ENCODE measurements at regions of chr16 and their contacts with region 1.

Region 1: DNA sequence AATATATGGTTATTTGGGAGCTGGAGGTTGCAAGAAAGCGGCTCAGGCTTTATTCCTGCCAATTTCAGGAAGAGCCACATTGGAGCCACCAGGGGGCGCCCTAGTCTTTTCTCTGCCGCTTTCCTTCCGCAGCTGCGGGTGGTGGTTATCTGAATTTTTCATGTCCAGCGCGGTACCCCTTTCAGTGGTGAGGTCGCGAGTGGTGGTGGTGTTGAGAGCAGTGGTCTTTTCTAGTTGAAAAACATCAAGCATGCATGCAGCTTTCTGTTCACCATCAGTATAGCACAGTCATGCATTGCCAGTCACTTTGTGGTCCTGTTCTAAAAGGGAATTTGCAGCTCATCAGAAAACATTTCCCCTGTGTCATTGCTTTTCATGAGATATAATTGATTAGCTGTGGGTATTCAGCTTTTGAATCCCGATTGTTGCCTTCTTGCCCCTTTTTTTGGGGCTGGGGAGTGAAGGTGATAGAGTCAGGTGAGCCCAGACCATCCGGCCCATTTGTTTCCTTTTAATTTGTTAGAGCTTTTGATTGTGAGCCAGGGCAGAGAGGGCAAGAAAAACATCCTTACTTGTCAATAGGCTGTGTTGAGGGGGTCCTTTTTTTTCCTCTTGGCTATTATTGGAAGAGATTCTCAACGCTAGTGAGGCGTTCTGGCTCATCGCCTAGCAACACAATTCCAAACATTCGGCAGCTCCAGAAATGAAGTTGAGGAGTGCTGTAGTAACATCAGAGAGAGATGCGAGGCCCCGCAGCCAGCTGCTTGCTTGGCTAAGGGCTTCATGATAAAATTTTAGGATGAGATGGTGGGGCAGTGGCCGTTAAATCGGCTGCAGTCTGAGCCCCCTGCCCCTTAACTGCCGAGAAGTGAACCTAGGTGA is 119.0 kb downstream of the SNX29 start:
- DNase-seq: peak; percentile 65 to 87 (median 78)
- ATAC-seq: peak; percentile 59 to 61
- H3K4me3 ChIP-seq: peak overlapping the region; percentile 25
- H3K27ac ChIP-seq: no peak overlapping the region
- H3K4me1 ChIP-seq: peaks cover 13% of the 10 kb centered on the region
- H3K27me3 ChIP-seq: no peaks in the 10 kb centered on the region

Region 2: DNA sequence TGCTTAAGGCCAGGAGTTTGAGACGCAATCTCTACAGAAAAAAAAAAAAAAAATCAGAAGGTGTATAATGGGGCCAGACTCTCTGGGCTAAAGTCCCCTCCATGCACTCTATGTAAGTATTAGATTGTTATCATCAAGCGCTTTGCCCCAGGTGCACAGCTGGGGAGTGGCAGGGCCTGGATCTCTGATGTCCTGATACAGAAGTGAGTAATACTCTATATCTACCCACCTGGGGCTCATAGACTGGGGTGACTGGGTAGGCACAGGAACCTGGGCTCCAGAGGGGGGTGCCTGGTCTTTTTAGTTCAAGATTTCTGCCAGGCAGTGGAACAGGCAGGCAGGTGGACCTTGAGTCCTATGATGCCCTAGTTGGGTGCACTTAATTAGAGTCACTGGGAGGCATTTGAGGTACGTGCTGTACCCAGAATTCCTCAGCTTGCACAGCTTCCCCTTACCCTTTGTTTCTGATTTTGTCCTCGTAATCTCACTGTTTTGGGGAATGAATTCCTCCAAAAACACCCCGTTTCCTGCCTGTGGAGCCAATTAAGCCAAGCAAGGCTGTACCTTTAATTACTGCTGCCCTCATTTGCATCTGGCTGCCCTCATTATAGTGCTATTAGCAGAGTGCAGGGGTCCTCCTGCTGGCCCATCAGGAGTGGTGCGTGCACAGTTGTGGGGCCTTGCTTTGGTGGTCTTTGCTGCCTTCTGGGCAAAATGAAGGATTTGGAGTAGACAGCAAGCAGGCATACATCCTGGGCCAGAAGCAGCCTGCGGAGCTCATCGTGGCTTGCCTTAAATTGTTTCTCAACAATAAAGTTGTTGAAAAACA is 120.0 kb after region 1 on chr16:
- intact Hi-C with region 1: loop called in 3 of 4 experiments (anchors 5 to 10 kb)
- DNase-seq: no peak
- ATAC-seq: peak in 1 of 2 donors; percentile 46
- H3K4me3 ChIP-seq: no peak overlapping the region
- H3K27ac ChIP-seq: no peak overlapping the region
- H3K4me1 ChIP-seq: no peaks in the 10 kb centered on the region
- H3K27me3 ChIP-seq: no peaks in the 10 kb centered on the region

Region 3: DNA sequence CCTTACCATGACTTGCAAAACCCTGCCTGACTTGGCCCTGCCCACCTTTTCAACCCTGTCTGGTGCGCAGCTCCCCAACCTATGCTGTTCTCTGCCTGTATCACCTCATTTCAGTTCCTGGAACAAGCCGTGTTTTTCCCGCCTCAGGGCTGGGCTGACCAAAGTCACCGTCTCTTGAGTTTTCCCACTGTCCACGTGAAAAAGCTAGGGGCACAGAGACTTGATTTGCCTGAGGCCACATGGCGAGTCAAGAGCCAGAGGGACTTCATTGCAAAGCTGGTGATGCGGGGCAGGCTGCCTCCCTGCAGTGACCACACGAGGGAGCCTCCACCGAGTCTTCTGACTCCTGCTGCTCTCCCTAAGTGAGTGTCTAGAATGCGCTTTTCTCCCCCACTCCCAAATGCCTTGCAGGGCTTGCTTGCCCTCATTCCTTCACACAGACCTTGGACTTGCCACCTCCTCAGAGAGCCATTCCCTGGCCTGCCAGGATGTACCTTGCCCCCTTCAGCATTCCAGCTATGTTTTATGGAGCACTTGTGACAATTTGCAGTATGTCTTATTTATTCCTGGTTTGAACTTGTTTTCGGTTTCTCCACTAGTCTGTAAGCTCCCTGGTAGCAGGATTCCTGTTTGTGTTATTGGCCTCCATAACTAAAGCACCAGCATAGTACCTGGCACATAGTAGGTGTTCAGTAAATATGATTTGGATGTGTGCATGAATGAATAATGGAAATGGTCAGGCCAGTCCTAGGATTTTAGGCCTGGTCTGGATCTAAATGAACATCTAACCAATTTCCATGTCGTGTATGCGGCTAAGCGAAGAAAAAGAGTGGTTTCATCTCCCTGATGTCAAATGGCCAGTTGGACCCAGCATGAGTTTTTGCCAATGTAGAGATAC is 133.3 kb after region 1 on chr16:
- intact Hi-C with region 1: loop called in 1 of 4 experiments (anchors 10 kb)
- DNase-seq: peak; percentile 41 to 81 (median 71)
- ATAC-seq: peak; percentile 71 to 80
- H3K4me3 ChIP-seq: no peak overlapping the region
- H3K27ac ChIP-seq: no peak overlapping the region
- H3K4me1 ChIP-seq: no peaks in the 10 kb centered on the region
- H3K27me3 ChIP-seq: no peaks in the 10 kb centered on the region

Region 4: DNA sequence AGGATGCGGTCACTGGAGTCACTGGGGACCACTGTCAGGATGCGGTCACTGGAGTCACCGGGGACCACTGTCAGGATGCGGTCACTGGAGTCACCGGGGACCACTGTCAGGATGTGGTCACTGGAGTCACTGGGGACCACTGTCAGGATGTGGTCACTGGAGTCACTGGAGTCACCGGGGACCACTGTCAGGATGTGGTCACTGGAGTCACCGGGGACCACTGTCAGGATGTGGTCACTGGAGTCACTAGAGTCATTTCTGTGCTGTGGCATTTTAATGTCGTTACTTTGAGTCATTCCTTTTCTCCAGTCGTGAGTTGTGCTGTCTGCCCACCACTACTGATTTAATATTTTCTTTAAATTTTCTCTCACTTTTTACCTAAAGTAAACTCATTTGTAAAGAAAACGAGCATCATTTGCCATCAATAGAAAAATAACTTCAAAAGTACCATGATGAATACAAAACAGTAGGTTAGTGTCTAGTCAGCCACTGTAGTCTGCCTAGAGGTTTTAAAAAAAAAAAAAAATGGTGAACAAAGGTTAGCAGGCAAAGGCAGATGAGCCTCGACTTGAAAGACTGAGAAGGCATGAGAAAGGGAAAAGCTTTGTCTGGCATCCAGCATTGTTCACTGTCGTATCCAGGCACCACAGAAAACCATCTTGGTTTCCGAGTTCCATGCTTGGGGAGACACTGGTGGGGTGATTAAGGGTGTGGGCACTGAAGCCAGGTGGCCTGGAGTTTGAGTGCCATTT is 227.7 kb after region 1 on chr16:
- intact Hi-C with region 1: loop called in 1 of 4 experiments (anchors 10 kb)
- DNase-seq: no peak
- ATAC-seq: no peak
- H3K4me3 ChIP-seq: no peak overlapping the region
- H3K27ac ChIP-seq: no peak overlapping the region
- H3K4me1 ChIP-seq: peaks cover 2% of the 10 kb centered on the region
- H3K27me3 ChIP-seq: no peaks in the 10 kb centered on the region

Region 5: DNA sequence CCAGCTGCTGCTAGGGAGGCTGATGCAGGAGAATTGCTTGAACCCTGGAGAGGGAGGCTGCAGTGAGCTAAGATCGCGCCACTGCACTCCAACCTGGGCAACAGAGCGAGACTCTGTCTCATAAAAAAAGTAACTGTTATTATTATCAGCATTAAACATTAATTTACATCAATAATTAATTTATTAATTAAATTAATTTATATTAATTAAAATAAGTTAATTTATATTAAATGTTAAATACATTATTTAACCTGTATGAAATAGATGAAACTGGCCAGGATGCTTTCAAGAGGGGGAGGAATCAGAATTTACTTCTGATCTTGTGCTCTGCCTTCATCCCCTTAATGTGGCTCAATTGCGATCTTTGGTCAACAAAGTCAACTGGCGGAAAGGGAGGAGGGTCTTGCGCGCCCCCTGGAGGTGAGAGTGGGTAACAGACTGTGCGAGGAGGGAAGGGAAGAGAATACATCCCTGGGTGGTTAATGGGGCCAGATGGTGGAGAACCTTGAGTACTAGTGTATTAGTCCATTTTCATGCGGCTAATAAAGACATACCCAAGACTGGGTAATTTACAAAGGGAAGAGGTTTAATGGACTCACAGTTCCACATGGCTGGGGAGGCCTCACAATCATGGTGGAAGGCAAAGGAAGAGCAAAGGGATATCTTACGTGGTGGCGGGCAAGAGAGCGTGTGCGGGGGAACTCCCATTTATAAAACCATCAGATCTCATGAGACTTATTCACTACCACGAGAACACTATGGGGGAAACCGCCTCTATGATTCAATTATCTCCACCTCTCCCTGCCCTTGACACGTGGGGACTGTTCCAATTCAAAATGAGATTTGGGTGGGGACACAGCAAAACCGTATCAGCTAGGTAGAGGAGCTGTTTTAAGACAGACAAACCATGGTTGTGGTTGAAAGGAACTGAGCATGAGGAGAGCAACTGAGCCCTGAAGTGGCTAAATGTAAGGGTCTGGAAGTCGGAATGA is 723.9 kb after region 1 on chr16:
- intact Hi-C with region 1: loop called in 2 of 4 experiments (anchors 10 kb)
- DNase-seq: peak; percentile 60 to 85 (median 79)
- ATAC-seq: peak; percentile 45 to 61
- H3K4me3 ChIP-seq: no peak overlapping the region
- H3K27ac ChIP-seq: no peak overlapping the region
- H3K4me1 ChIP-seq: no peaks in the 10 kb centered on the region
- H3K27me3 ChIP-seq: no peaks in the 10 kb centered on the region